CD4-positive, alpha-beta memory T cell (primary cell): ENCODE measurements at regions of chr2 and their contacts with region 1.

Region 1: GRCh38 chr2:189661148-189661956 is at the start of gene ASNSD1:
- DNase-seq: peak; percentile 98 to 100 (median 100)
- H3K4me3 ChIP-seq: peak within 1 kb of the TSS; percentile 61 to 85
- H3K4me3 Mint-ChIP-seq: no peak within 1 kb of the TSS
- H3K27ac ChIP-seq: peak within 1 kb of the TSS; percentile 99
- H3K27ac Mint-ChIP-seq: no peak within 1 kb of the TSS
- H3K4me1 ChIP-seq: peaks cover 67% of the 10 kb centered on the region
- H3K4me1 Mint-ChIP-seq: peaks cover 40 to 57% (median 43%) of the 10 kb centered on the region in 4 donors
- H3K27me3 ChIP-seq: no peaks in the 10 kb centered on the region
- H3K27me3 Mint-ChIP-seq: no peaks in the 10 kb centered on the region
- total RNA-seq, gene ASNSD1: 46.9 to 47.0 TPM

Region 2: GRCh38 chr2:189580658-189581353 is 80.5 kb before region 1 on chr2 and contains the start of gene SLC40A1:
- CTCF ChIA-PET with region 1: interaction called, 7 read pairs
- POLR2A ChIA-PET with region 1: interaction called, 48 read pairs
- intact Hi-C with region 1: loop called (anchors 1 kb)
- DNase-seq: peak; percentile 66 to 78 (median 72)
- H3K4me3 ChIP-seq: peak within 1 kb of the TSS; percentile 58 to 63
- H3K4me3 Mint-ChIP-seq: peak within 1 kb of the TSS; percentile 91 to 96 (median 94)
- H3K27ac ChIP-seq: peak within 1 kb of the TSS; percentile 46
- H3K27ac Mint-ChIP-seq: peak within 1 kb of the TSS; percentile 71 to 96 (median 90)
- H3K4me1 ChIP-seq: peaks cover 47% of the 10 kb centered on the region
- H3K4me1 Mint-ChIP-seq: peaks cover 33 to 65% (median 47%) of the 10 kb centered on the region in 4 donors
- H3K27me3 ChIP-seq: no peaks in the 10 kb centered on the region
- H3K27me3 Mint-ChIP-seq: peaks cover 1 to 10% of the 10 kb centered on the region in 2 donors
- total RNA-seq, gene SLC40A1: 27.4 to 30.0 TPM

Region 3: GRCh38 chr2:189698020-189698887 is 36.9 kb after region 1 on chr2:
- CTCF ChIA-PET with region 1: interaction called, 116 read pairs
- POLR2A ChIA-PET with region 1: interaction called, 11 read pairs
- intact Hi-C with region 1: loop called (anchors 1 kb)
- DNase-seq: peak; percentile 40 to 50 (median 48)
- H3K4me3 ChIP-seq: no peak overlapping the region
- H3K4me3 Mint-ChIP-seq: no peak overlapping the region
- H3K27ac ChIP-seq: no peak overlapping the region
- H3K27ac Mint-ChIP-seq: peak overlapping the region in 2 of 7 donors; percentile 3 to 36
- H3K4me1 ChIP-seq: no peaks in the 10 kb centered on the region
- H3K4me1 Mint-ChIP-seq: no peaks in the 10 kb centered on the region
- H3K27me3 ChIP-seq: no peaks in the 10 kb centered on the region
- H3K27me3 Mint-ChIP-seq: no peaks in the 10 kb centered on the region

Region 4: GRCh38 chr2:189783927-189784867 is 122.8 kb after region 1 on chr2 and contains the starts of genes ORMDL1 and PMS1:
- CTCF ChIA-PET with region 1: interaction called, 3 read pairs
- POLR2A ChIA-PET with region 1: interaction called, 19 read pairs
- intact Hi-C with region 1: loop called (anchors 1 kb)
- DNase-seq: peak; percentile 93 to 96 (median 96)
- H3K4me3 ChIP-seq: peak within 1 kb of the TSS; percentile 71 to 74
- H3K4me3 Mint-ChIP-seq: peak within 1 kb of the TSS; percentile 92 to 97 (median 94)
- H3K27ac ChIP-seq: peak within 1 kb of the TSS; percentile 93
- H3K27ac Mint-ChIP-seq: peak within 1 kb of the TSS; percentile 96 to 97 (median 97)
- H3K4me1 ChIP-seq: peaks cover 52% of the 10 kb centered on the region
- H3K4me1 Mint-ChIP-seq: peaks cover 43 to 64% (median 54%) of the 10 kb centered on the region in 4 donors
- H3K27me3 ChIP-seq: no peaks in the 10 kb centered on the region
- H3K27me3 Mint-ChIP-seq: no peaks in the 10 kb centered on the region
- total RNA-seq, gene ORMDL1: 187 to 190 TPM
- total RNA-seq, gene PMS1: 29.1 to 35.1 TPM

Region 5: GRCh38 chr2:189836657-189837056 is 175.3 kb after region 1 on chr2:
- CTCF ChIA-PET with region 1: no interaction called
- POLR2A ChIA-PET with region 1: no interaction called
- intact Hi-C with region 1: no loop called
- DNase-seq: no peak
- H3K4me3 ChIP-seq: no peak overlapping the region
- H3K4me3 Mint-ChIP-seq: no peak overlapping the region
- H3K27ac ChIP-seq: no peak overlapping the region
- H3K27ac Mint-ChIP-seq: no peak overlapping the region
- H3K4me1 ChIP-seq: no peaks in the 10 kb centered on the region
- H3K4me1 Mint-ChIP-seq: peaks cover 0 to 4% (median under 1%) of the 10 kb centered on the region in 4 donors
- H3K27me3 ChIP-seq: no peaks in the 10 kb centered on the region
- H3K27me3 Mint-ChIP-seq: no peaks in the 10 kb centered on the region

Region 6: DNA sequence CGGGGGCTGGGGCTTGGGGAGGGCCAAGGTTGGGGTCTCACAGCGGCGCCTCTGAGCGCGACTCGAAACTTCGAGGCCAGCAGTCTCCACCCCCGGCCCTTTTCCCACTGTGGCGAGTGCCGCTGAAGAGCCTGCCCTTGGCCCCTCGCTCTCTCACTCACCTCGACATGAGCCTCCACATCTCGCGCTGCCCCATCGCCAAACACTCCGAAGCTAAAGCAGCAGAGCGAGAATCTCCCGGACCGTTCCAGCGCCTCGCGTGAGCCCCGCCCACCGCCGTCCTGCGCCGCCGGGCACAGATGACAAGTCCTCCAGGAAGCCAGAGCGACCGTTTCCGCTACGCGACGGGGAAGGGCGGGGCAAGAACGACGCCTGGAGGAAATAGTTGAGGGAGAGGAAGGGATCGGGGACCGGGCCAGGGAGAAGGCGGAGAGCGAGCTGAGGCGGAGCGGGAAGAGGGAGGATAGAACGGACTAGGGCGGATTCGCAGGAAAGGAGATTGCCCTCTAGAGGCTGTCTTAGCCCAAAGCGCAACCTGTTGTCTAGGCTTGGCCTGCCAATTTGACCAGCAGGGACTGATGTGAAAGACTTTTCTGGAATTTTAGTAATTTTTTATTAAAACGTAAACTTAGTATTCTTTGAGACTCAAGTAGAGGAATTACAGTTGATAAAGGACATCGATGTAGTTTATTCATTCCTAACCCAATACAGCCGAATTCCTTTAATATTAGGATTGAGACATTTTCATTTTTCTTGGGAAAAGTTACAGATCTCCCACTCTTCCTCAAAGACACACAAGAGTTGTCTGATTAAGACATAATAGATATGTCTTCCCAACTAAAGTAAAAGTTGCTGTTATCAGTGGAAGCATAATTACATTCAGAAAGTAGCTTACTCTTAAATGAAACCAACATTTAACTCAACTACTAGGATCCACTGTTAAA is 658.5 kb after region 1 on chr2 and contains the start of gene HIBCH:
- CTCF ChIA-PET with region 1: no interaction called
- POLR2A ChIA-PET with region 1: no interaction called
- intact Hi-C with region 1: loop called (anchors 5 kb)
- DNase-seq: peak; percentile 71 to 87 (median 74)
- H3K4me3 ChIP-seq: peak within 1 kb of the TSS; percentile 62 to 75
- H3K4me3 Mint-ChIP-seq: peak within 1 kb of the TSS; percentile 96 to 100 (median 99)
- H3K27ac ChIP-seq: peak within 1 kb of the TSS; percentile 77
- H3K27ac Mint-ChIP-seq: peak within 1 kb of the TSS; percentile 90 to 100 (median 98)
- H3K4me1 ChIP-seq: peaks cover 22% of the 10 kb centered on the region
- H3K4me1 Mint-ChIP-seq: peaks cover 28 to 54% (median 43%) of the 10 kb centered on the region in 4 donors
- H3K27me3 ChIP-seq: no peaks in the 10 kb centered on the region
- H3K27me3 Mint-ChIP-seq: peaks cover 1 to 2% of the 10 kb centered on the region in 2 donors
- total RNA-seq, gene HIBCH: 20.0 to 22.3 TPM